Heart right ventricle (tissue), 16 donors: ENCODE measurements at regions of chr1 and their contacts with region 1.

Region 1: DNA sequence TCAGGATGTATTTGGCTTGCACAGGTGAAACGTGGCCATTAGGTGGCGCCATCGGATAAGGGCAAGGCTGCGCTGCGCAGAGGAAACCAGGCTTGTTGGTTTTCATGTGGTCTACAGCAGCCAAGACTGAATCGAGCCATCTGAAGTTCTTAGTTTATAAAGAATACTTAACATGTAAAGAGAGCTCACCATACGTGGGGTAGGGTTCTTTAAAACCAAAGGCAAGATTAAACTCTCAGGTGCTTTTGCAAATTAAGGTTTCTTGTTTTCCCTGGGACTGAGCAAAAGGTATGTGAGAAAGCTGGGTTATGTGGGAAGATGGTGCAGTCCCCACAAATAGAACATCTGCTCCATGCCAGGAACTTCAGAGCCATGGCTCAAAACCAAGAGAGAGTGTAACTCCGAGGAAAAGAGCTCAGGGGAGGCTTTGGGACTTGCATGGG is 9.3 kb downstream of the MASP2 start:
- DNase-seq: peak; percentile 82 to 88
- ATAC-seq: peak; percentile 86 to 97 (median 94)
- H3K4me3 ChIP-seq: no peak overlapping the region
- H3K27ac ChIP-seq: no peak overlapping the region
- H3K4me1 ChIP-seq: peaks cover 0 to 13% (median 3%) of the 10 kb centered on the region in 9 donors
- H3K27me3 ChIP-seq: no peaks in the 10 kb centered on the region
- CTCF ChIP-seq: peak; percentile 89 to 99 (median 97)

Region 2: DNA sequence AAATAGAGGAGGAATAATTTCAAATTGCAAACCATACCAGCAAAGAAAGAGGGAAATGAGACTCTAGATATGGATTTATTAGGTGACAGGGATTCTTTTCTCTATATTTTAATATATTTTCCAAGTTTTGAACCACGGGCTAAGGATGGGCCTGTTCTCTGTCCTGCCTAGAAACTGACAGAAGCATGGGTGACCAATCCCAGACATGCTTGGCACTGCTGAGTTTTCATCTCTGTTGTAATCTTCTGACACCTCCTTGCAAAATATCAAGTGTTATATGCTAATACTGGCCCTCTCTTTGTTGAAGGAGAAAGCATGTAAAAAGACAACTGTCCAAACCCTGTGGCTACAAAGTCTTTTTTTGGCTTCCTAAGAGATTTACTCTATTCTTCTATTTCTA is 150.6 kb after region 1 on chr1:
- intact Hi-C with region 1: no loop called
- DNase-seq: no peak
- ATAC-seq: peak in 6 of 8 donors; percentile 52 to 83 (median 65)
- H3K4me3 ChIP-seq: no peak overlapping the region
- H3K27ac ChIP-seq: peak overlapping the region in 3 of 10 donors; percentile 2 to 56 (median 29)
- H3K4me1 ChIP-seq: peaks cover 0 to 34% (median 24%) of the 10 kb centered on the region in 9 donors
- H3K27me3 ChIP-seq: no peaks in the 10 kb centered on the region
- CTCF ChIP-seq: no peak

Region 3: GRCh38 chr1:11237356-11237755 is 199.6 kb after region 1 on chr1:
- intact Hi-C with region 1: loop called in 2 of 10 experiments (anchors 10 kb)
- DNase-seq: no peak
- ATAC-seq: peak in 6 of 8 donors; percentile 11 to 47 (median 25)
- H3K4me3 ChIP-seq: no peak overlapping the region
- H3K27ac ChIP-seq: peak overlapping the region in 8 of 10 donors; percentile 1 to 65 (median 44)
- H3K4me1 ChIP-seq: peaks cover 0 to 16% (median 9%) of the 10 kb centered on the region in 9 donors
- H3K27me3 ChIP-seq: no peaks in the 10 kb centered on the region
- CTCF ChIP-seq: no peak